ENCODE measurements at regions of chr3 and their contacts with region 1.

Region 1: GRCh38 chr3:156509189-156510174 is 45.4 kb downstream of the SSR3 start:
- DNase-seq: peak; percentile 80
- H3K4me3 ChIP-seq: no peak overlapping the region
- H3K27ac ChIP-seq: no peak overlapping the region
- H3K4me1 ChIP-seq: peaks cover 3% of the 10 kb centered on the region
- H3K27me3 ChIP-seq: no peaks in the 10 kb centered on the region
- CTCF ChIP-seq: peak; percentile 32 to 35
- POLR2A ChIP-seq: no peak

Region 2: GRCh38 chr3:156174229-156174847 is 335.1 kb before region 1 on chr3:
- CTCF ChIA-PET with region 1: interaction called, 267 read pairs
- POLR2A ChIA-PET with region 1: no interaction called
- dilution Hi-C with region 1: loop called (anchors 25 kb)
- intact Hi-C with region 1: loop called (anchors 1 kb)
- DNase-seq: peak; percentile 74
- H3K4me3 ChIP-seq: no peak overlapping the region
- H3K27ac ChIP-seq: no peak overlapping the region
- H3K4me1 ChIP-seq: no peaks in the 10 kb centered on the region
- H3K27me3 ChIP-seq: no peaks in the 10 kb centered on the region
- CTCF ChIP-seq: peak; percentile 32 to 45
- POLR2A ChIP-seq: no peak

Region 3: GRCh38 chr3:156416846-156417558 is 92.5 kb before region 1 on chr3:
- CTCF ChIA-PET with region 1: no interaction called
- POLR2A ChIA-PET with region 1: no interaction called
- dilution Hi-C with region 1: no loop called
- intact Hi-C with region 1: no loop called
- DNase-seq: no peak
- H3K4me3 ChIP-seq: no peak overlapping the region
- H3K27ac ChIP-seq: no peak overlapping the region
- H3K4me1 ChIP-seq: no peaks in the 10 kb centered on the region
- H3K27me3 ChIP-seq: no peaks in the 10 kb centered on the region
- CTCF ChIP-seq: no peak
- POLR2A ChIP-seq: no peak

Region 4: DNA sequence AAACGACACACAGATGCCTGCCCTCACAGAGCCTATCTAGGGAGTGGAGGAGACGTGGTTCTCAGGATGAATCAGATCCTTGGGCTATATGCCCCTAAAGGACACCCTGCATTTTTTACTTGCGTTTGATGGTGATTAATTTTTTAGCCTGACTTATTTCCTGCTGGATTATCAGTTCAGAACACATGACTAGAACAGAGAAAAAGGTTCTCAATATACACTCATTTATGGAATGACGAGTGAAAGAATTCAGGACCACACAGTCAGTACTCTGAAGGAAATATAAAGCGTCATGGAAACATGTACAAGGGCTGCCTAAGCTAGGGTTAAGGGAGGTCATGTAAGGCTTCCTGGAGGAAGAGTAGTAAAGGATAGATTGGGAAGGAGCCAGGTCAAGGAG is 76.3 kb before region 1 on chr3:
- CTCF ChIA-PET with region 1: interaction called, 14 read pairs
- POLR2A ChIA-PET with region 1: no interaction called
- dilution Hi-C with region 1: no loop called
- intact Hi-C with region 1: no loop called
- DNase-seq: peak; percentile 92
- H3K4me3 ChIP-seq: no peak overlapping the region
- H3K27ac ChIP-seq: peak overlapping the region; percentile 48
- H3K4me1 ChIP-seq: peaks cover 25% of the 10 kb centered on the region
- H3K27me3 ChIP-seq: no peaks in the 10 kb centered on the region
- CTCF ChIP-seq: no peak
- POLR2A ChIP-seq: no peak

Region 5: DNA sequence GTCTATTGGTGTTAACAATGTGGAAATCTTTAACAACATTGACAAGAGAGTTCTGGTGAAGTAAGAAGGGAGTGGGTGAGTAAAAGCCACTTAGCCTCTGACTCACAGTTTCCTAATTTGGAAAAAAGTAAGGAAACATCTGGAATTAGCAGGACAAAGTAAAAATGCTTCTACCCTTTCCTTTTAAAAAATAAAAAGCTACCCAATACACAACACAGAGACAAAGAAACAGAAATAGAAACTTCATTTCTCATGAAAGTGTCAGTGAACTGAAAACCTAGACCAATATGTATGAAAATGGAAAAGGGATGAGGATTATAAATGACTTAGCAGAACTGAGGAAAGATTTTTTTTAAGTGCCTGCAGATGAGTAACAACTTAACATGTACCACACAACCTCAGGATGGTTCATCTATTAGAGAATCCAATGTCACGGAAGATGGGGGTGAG is 20.0 kb before region 1 on chr3:
- CTCF ChIA-PET with region 1: interaction called, 15 read pairs
- POLR2A ChIA-PET with region 1: no interaction called
- dilution Hi-C with region 1: no loop called
- intact Hi-C with region 1: no loop called
- DNase-seq: peak; percentile 85
- H3K4me3 ChIP-seq: no peak overlapping the region
- H3K27ac ChIP-seq: peak overlapping the region; percentile 74
- H3K4me1 ChIP-seq: peaks cover 31% of the 10 kb centered on the region
- H3K27me3 ChIP-seq: no peaks in the 10 kb centered on the region
- CTCF ChIP-seq: no peak
- POLR2A ChIP-seq: no peak

Region 6: DNA sequence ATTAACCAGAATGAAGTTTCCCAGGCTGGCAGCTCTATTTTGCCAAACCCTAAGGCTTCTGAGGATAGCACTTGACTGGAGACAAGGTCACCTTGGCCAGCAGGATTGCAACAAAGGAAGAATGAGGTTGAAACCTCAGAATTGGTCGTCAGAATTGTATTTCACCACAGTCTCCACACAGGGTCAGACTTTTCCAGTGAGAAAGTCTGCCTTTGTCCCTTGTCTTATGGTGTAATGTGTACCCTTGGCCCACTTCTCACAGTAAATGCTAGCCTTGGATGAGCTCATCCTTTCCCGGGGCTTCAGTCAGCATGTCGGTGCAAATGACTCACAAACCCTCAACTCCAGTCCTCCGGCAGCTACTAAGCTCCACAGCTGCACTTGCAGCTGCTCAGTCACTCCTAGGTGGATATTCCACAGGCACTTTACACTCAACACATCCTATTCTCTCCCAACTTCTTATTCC is 25.7 kb after region 1 on chr3:
- CTCF ChIA-PET with region 1: interaction called, 11 read pairs
- POLR2A ChIA-PET with region 1: no interaction called
- dilution Hi-C with region 1: no loop called
- intact Hi-C with region 1: no loop called
- DNase-seq: peak; percentile 94
- H3K4me3 ChIP-seq: no peak overlapping the region
- H3K27ac ChIP-seq: peak overlapping the region; percentile 55
- H3K4me1 ChIP-seq: peaks cover 7% of the 10 kb centered on the region
- H3K27me3 ChIP-seq: no peaks in the 10 kb centered on the region
- CTCF ChIP-seq: peak in 1 of 2 donors; percentile 22
- POLR2A ChIP-seq: peak; percentile 58